GM12878 (cell line): ENCODE measurements at regions of chr2 and their contacts with region 1.

Region 1: GRCh38 chr2:184452907-184453306 is 145.4 kb upstream of the ZNF804A start:
- DNase-seq: peak; percentile 13
- ATAC-seq: peak; percentile 83
- H3K4me3 ChIP-seq: no peak overlapping the region
- H3K27ac ChIP-seq: no peak overlapping the region
- H3K4me1 ChIP-seq: peaks cover 14% of the 10 kb centered on the region
- H3K27me3 ChIP-seq: no peaks in the 10 kb centered on the region
- CTCF ChIP-seq: no peak
- EP300 ChIP-seq: peak; percentile 15 to 37; a peak in 1 of 4 replicates
- POLR2A ChIP-seq: no peak
- RAD21 ChIP-seq: no peak

Region 2: GRCh38 chr2:184463102-184463865 is 10.4 kb after region 1 on chr2:
- CTCF ChIA-PET with region 1: interaction called, 6 read pairs
- POLR2A ChIA-PET with region 1: no interaction called
- RAD21 ChIA-PET with region 1: interaction called, 4 read pairs
- SMC1A ChIA-PET with region 1: interaction called, 11 read pairs
- in situ Hi-C with region 1: no loop called
- intact Hi-C with region 1: no loop called
- DNase-seq: no peak
- ATAC-seq: peak; percentile 44
- H3K4me3 ChIP-seq: no peak overlapping the region
- H3K27ac ChIP-seq: no peak overlapping the region
- H3K4me1 ChIP-seq: no peaks in the 10 kb centered on the region
- H3K27me3 ChIP-seq: no peaks in the 10 kb centered on the region
- CTCF ChIP-seq: no peak
- EP300 ChIP-seq: no peak
- POLR2A ChIP-seq: no peak
- RAD21 ChIP-seq: no peak